ENCODE measurements at regions of chr16 and their contacts with region 1.

Region 1: GRCh38 chr16:85296859-85297660 is 184.8 kb upstream of the CIBAR2 start:
- DNase-seq: peak in 1 of 2 experiments; percentile 87
- H3K4me3 ChIP-seq: no peak overlapping the region
- H3K27ac ChIP-seq: no peak overlapping the region
- H3K4me1 ChIP-seq: no peaks in the 10 kb centered on the region
- H3K27me3 ChIP-seq: no peaks in the 10 kb centered on the region; a peak in 1 of 7 replicates
- CTCF ChIP-seq: peak; percentile 91 to 93 (median 91)
- EP300 ChIP-seq: no peak
- POLR2A ChIP-seq: no peak
- RAD21 ChIP-seq: peak; percentile 49 to 68; a peak in 3 of 4 replicates

Region 2: DNA sequence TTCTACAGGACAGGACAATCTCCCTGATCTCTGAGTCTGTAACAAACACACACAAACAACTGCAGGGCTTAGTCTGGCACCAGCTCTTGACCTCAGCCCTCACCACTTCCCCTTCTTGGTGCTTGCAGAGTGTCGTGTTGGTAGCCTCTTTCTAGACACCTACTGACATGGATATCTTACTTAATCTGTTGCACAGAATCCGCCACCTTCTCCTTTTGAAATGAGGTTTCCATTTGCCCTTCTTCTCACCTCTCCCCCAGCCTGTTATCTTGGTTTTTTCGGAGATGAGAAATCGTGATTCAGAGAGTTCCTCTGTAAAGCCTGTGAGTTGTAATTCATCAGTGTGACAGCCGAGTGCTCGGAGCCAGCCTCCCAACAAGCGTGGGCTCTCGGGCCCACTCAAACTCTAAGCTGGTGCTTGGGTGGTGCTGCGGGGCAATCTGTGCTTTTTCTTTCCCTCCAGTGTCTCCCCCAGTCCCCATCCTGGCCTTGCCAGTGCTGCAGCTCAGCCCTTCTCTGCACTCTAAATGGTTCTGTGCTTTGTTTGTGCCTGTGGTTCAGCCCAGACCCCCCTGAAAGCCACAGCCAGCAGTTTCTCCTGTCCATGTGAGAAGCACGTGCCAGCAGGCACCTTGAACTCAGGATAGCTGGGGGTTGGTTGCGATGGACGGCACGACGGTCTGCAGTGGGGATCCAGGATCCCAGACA is 241.4 kb before region 1 on chr16:
- CTCF ChIA-PET with region 1: no interaction called
- POLR2A ChIA-PET with region 1: no interaction called
- DNase-seq: no peak
- H3K4me3 ChIP-seq: no peak overlapping the region
- H3K27ac ChIP-seq: no peak overlapping the region
- H3K4me1 ChIP-seq: peaks cover 0 to 5% (median 4%) of the 10 kb centered on the region in 4 experiments; a peak in 4 of 7 replicates
- H3K27me3 ChIP-seq: no peaks in the 10 kb centered on the region
- CTCF ChIP-seq: no peak
- EP300 ChIP-seq: no peak
- POLR2A ChIP-seq: no peak
- RAD21 ChIP-seq: no peak

Region 3: DNA sequence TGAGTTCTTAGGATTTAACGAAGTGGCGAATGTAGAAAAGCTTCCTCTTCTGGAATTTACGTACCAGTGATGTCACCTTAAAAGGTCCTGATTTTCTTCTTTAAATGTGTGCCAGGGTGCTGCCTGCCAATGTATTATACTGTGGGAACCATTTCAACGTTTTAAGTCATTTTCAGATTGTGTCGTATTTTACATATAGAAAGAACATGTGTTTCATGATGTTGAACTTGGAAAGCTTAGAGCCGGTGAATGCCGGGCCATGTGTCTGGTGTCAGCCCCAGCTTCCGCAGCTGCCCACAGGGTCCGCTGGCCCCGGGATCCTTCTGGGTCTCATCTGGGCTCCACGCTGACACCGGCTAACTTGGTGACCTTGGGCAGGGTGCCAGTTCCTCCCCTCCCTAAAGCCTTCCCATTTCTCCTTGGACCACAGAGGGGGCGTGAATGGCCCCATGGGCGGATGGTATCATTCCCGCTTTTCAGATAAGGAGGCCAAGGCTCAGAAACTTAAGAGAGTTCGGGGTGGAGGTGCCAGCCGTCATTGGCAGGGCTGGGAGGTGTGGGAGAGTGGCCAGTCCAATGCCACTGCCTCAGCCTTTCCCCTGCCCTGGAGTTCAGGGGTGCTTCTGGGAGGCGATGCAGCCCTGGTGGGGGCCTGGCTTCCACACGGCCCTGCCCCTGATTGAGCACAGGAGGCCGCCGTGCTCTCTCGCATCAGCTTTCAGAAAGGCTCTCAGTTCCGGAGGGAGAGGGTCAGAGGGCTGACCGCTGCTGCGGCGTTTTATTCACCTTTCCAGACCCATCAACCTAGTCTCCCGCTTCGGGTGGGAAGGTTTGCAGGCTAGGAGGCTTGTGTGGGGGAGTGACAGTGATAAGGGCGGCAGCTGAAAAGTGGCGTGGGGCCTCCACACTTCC is 116.0 kb before region 1 on chr16:
- CTCF ChIA-PET with region 1: no interaction called
- POLR2A ChIA-PET with region 1: no interaction called
- DNase-seq: no peak
- H3K4me3 ChIP-seq: no peak overlapping the region
- H3K27ac ChIP-seq: no peak overlapping the region
- H3K4me1 ChIP-seq: peaks cover 0 to 3% (median 2%) of the 10 kb centered on the region in 4 experiments; a peak in 4 of 7 replicates
- H3K27me3 ChIP-seq: no peaks in the 10 kb centered on the region
- CTCF ChIP-seq: no peak
- EP300 ChIP-seq: no peak
- POLR2A ChIP-seq: no peak
- RAD21 ChIP-seq: no peak

Region 4: GRCh38 chr16:85210423-85211169 is 86.5 kb before region 1 on chr16:
- CTCF ChIA-PET with region 1: no interaction called
- POLR2A ChIA-PET with region 1: no interaction called
- DNase-seq: no peak
- H3K4me3 ChIP-seq: no peak overlapping the region
- H3K27ac ChIP-seq: no peak overlapping the region
- H3K4me1 ChIP-seq: peaks cover 2 to 24% (median 19%) of the 10 kb centered on the region in 4 experiments
- H3K27me3 ChIP-seq: no peaks in the 10 kb centered on the region
- CTCF ChIP-seq: no peak
- EP300 ChIP-seq: no peak
- POLR2A ChIP-seq: no peak
- RAD21 ChIP-seq: no peak

Region 5: GRCh38 chr16:85258629-85259028 is 38.4 kb before region 1 on chr16:
- CTCF ChIA-PET with region 1: interaction called, 26 read pairs
- POLR2A ChIA-PET with region 1: no interaction called
- DNase-seq: no peak
- H3K4me3 ChIP-seq: no peak overlapping the region
- H3K27ac ChIP-seq: no peak overlapping the region
- H3K4me1 ChIP-seq: peaks cover 0 to 8% (median 3%) of the 10 kb centered on the region in 4 experiments; a peak in 5 of 7 replicates
- H3K27me3 ChIP-seq: no peaks in the 10 kb centered on the region
- CTCF ChIP-seq: no peak
- EP300 ChIP-seq: no peak
- POLR2A ChIP-seq: no peak
- RAD21 ChIP-seq: no peak

Measured in H1 (cell line).